ENCODE measurements at regions of chr20 and their contacts with region 1.

Region 1: GRCh38 chr20:16119909-16120308 is 453.3 kb downstream of the KIF16B start:
- DNase-seq: peak; percentile 94
- ATAC-seq: peak; percentile 94
- H3K4me3 ChIP-seq: no peak overlapping the region
- H3K27ac ChIP-seq: peak overlapping the region; percentile 15
- H3K4me1 ChIP-seq: peaks cover 34% of the 10 kb centered on the region
- H3K27me3 ChIP-seq: no peaks in the 10 kb centered on the region
- CTCF ChIP-seq: no peak
- EP300 ChIP-seq: peak in 1 of 2 experiments; percentile 82; a peak in 2 of 4 replicates
- POLR2A ChIP-seq: no peak
- RAD21 ChIP-seq: no peak

Region 2: GRCh38 chr20:16098890-16099639 is 20.8 kb before region 1 on chr20:
- CTCF ChIA-PET with region 1: no interaction called
- POLR2A ChIA-PET with region 1: interaction called, 3 read pairs
- in situ Hi-C with region 1: no loop called
- intact Hi-C with region 1: loop called (anchors 2 kb)
- DNase-seq: peak; percentile 78
- ATAC-seq: peak; percentile 46; the same call in 2 of the 3 replicates
- H3K4me3 ChIP-seq: no peak overlapping the region
- H3K27ac ChIP-seq: no peak overlapping the region
- H3K4me1 ChIP-seq: peaks cover 31% of the 10 kb centered on the region
- H3K27me3 ChIP-seq: no peaks in the 10 kb centered on the region
- CTCF ChIP-seq: no peak
- EP300 ChIP-seq: peak in 1 of 2 experiments; percentile 84; a peak in 2 of 4 replicates
- POLR2A ChIP-seq: no peak
- RAD21 ChIP-seq: no peak